HepG2 (cell line): ENCODE measurements at regions of chr2 and their contacts with region 1.

Region 1: DNA sequence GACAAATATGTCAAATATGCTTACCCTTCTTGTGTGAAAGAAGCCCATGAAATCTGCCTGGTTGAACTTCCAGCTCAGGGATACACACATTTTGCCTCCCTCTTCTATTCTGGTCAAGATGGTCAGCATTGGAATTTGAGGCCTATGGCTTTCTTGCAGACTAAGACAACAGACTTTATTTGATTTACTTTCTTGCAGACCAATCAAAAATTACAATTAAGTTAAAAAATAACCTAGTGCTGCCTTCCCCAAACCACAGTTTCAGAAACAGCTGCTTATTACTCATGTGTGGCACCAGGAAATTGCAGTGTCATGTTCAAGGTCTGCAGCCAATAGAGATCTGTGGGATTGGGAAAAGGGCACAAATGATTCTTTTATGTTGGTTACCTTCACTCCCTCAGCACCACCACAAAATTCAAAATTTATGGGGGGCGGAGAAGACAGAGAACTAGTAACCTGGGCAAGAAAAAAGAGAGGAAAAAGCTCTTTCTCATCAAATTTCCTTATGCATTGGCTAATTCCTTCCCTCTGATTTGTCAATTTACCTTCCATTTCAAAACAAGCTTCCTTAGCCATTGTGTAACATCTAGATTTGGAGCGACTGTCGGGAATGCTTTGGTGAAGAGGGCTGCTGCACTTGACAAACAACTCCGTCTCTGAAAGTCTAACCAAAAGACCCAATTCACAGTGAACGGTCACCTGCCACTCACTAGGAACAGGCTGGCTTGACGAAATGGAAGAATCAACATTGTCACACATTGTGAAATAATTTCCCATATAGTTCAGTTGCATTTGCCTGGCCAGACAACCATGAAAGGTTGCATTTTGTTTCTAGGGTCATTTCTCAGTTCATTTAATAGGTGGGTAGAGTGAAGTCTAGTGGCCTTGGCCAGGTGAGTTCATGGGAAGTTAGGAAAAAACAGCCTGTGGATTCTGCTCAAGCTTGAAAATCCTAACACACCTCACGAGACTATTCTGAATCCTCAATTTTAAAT is 100.4 kb upstream of the FZD5 start:
- DNase-seq: peak; percentile 100
- ATAC-seq: peak; percentile 95
- H3K4me3 ChIP-seq: peak overlapping the region; percentile 3 to 10 (median 3); a peak in 4 of 6 replicates
- H3K27ac ChIP-seq: peak overlapping the region; percentile 81
- H3K4me1 ChIP-seq: peaks cover 57% of the 10 kb centered on the region
- H3K27me3 ChIP-seq: no peaks in the 10 kb centered on the region
- CTCF ChIP-seq: no peak
- EP300 ChIP-seq: peak; percentile 97 to 99
- POLR2A ChIP-seq: peak in 1 of 2 experiments; percentile 57; a peak in 2 of 4 replicates
- RAD21 ChIP-seq: peak; percentile 36; the same call in 1 of the 2 replicates

Region 2: GRCh38 chr2:207516206-207516605 is 353.9 kb before region 1 on chr2:
- CTCF ChIA-PET with region 1: no interaction called
- POLR2A ChIA-PET with region 1: no interaction called
- in situ Hi-C with region 1: no loop called
- intact Hi-C with region 1: no loop called
- DNase-seq: no peak
- ATAC-seq: no peak
- H3K4me3 ChIP-seq: no peak overlapping the region
- H3K27ac ChIP-seq: no peak overlapping the region
- H3K4me1 ChIP-seq: no peaks in the 10 kb centered on the region
- H3K27me3 ChIP-seq: no peaks in the 10 kb centered on the region
- CTCF ChIP-seq: no peak
- EP300 ChIP-seq: no peak
- POLR2A ChIP-seq: no peak
- RAD21 ChIP-seq: no peak

Region 3: DNA sequence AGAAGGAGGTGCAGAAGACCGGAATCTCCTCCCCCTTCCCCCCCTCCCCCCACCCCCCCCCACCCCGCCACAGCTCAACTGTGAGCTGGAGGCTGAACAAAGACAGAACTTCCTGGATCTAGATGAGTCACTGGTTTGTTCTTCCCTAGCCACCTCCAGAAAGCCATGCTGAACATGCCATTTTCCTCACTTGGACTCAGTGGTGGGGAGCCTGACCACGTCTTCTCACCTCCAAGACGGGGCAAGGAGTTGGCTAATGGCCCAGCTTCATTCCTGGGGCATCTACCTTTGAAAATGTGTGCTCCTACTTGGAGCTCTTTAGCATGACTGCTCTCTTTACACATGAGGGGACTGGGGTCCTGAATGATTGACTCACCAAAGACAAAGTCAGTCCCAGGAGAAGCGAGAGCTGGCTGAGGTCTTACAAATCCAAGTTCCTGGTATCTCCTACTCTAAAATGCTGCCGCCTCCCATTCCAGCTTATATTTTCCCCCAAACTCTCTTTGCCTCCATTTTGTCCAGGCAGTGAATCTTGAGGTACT is 77.8 kb before region 1 on chr2:
- CTCF ChIA-PET with region 1: no interaction called
- POLR2A ChIA-PET with region 1: interaction called, 12 read pairs
- in situ Hi-C with region 1: no loop called
- intact Hi-C with region 1: loop called (anchors 2 kb)
- DNase-seq: peak; percentile 84
- ATAC-seq: peak; percentile 66
- H3K4me3 ChIP-seq: peak overlapping the region in 1 of 3 experiments; percentile 49; a peak in 2 of 6 replicates
- H3K27ac ChIP-seq: peak overlapping the region; percentile 82
- H3K4me1 ChIP-seq: peaks cover 73% of the 10 kb centered on the region
- H3K27me3 ChIP-seq: no peaks in the 10 kb centered on the region
- CTCF ChIP-seq: no peak
- EP300 ChIP-seq: peak in 1 of 2 experiments; percentile 16; a peak in 1 of 4 replicates
- POLR2A ChIP-seq: 0 out of 4 replicates have a peak, but pooled peaks have one; percentile 44 to 53
- RAD21 ChIP-seq: no peak

Region 4: DNA sequence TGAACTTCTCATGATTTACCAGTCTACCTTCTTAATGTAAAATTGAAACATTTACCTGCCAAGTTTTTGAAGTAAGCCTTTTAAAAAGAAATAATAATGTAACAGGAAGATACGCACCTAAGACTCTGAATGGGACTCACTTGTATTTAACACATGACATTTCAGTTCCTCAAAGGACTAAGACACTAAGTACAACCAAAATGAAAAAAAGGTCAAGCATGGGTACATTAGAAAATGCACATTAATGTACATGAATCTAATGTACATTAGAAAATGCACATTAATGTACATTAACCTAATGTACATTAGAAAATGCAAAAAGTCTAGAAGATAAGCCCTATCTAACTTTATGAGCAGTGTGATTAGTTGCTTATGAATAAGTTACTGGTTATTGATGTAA is 31.1 kb before region 1 on chr2:
- CTCF ChIA-PET with region 1: no interaction called
- POLR2A ChIA-PET with region 1: no interaction called
- in situ Hi-C with region 1: no loop called
- intact Hi-C with region 1: no loop called
- DNase-seq: no peak
- ATAC-seq: no peak
- H3K4me3 ChIP-seq: no peak overlapping the region
- H3K27ac ChIP-seq: no peak overlapping the region
- H3K4me1 ChIP-seq: peaks cover 43% of the 10 kb centered on the region
- H3K27me3 ChIP-seq: no peaks in the 10 kb centered on the region
- CTCF ChIP-seq: no peak
- EP300 ChIP-seq: no peak
- POLR2A ChIP-seq: no peak
- RAD21 ChIP-seq: no peak

Region 5: GRCh38 chr2:207926133-207926988 is 56.3 kb after region 1 on chr2:
- CTCF ChIA-PET with region 1: no interaction called
- POLR2A ChIA-PET with region 1: interaction called, 15 read pairs
- in situ Hi-C with region 1: no loop called
- intact Hi-C with region 1: loop called (anchors 2 kb)
- DNase-seq: peak; percentile 96
- ATAC-seq: peak; percentile 97
- H3K4me3 ChIP-seq: peak overlapping the region in 2 of 3 experiments; percentile 5 to 18; a peak in 2 of 6 replicates
- H3K27ac ChIP-seq: peak overlapping the region; percentile 66
- H3K4me1 ChIP-seq: peaks cover 51% of the 10 kb centered on the region
- H3K27me3 ChIP-seq: no peaks in the 10 kb centered on the region
- CTCF ChIP-seq: no peak
- EP300 ChIP-seq: peak; percentile 53 to 79; a peak in 3 of 4 replicates
- POLR2A ChIP-seq: peak in 1 of 2 experiments; percentile 17; a peak in 1 of 4 replicates
- RAD21 ChIP-seq: no peak; the same call in 1 of the 2 replicates

Region 6: GRCh38 chr2:207939342-207940108 is 69.4 kb after region 1 on chr2:
- CTCF ChIA-PET with region 1: no interaction called
- POLR2A ChIA-PET with region 1: interaction called, 13 read pairs
- in situ Hi-C with region 1: no loop called
- intact Hi-C with region 1: loop called (anchors 2 kb)
- DNase-seq: no peak
- ATAC-seq: no peak
- H3K4me3 ChIP-seq: no peak overlapping the region
- H3K27ac ChIP-seq: no peak overlapping the region
- H3K4me1 ChIP-seq: peaks cover 54% of the 10 kb centered on the region
- H3K27me3 ChIP-seq: no peaks in the 10 kb centered on the region
- CTCF ChIP-seq: no peak
- EP300 ChIP-seq: no peak
- POLR2A ChIP-seq: no peak
- RAD21 ChIP-seq: no peak

Region 7: GRCh38 chr2:208033758-208034502 is 163.8 kb after region 1 on chr2:
- CTCF ChIA-PET with region 1: no interaction called
- POLR2A ChIA-PET with region 1: interaction called, 3 read pairs
- in situ Hi-C with region 1: no loop called
- intact Hi-C with region 1: loop called (anchors 2 kb)
- DNase-seq: peak; percentile 97
- ATAC-seq: peak; percentile 90
- H3K4me3 ChIP-seq: peak overlapping the region; percentile 4 to 16 (median 14); a peak in 2 of 6 replicates
- H3K27ac ChIP-seq: peak overlapping the region; percentile 70
- H3K4me1 ChIP-seq: peaks cover 70% of the 10 kb centered on the region
- H3K27me3 ChIP-seq: no peaks in the 10 kb centered on the region
- CTCF ChIP-seq: peak; percentile 98
- EP300 ChIP-seq: peak; percentile 53 to 55; a peak in 3 of 4 replicates
- POLR2A ChIP-seq: no peak
- RAD21 ChIP-seq: peak; percentile 91

Region 8: DNA sequence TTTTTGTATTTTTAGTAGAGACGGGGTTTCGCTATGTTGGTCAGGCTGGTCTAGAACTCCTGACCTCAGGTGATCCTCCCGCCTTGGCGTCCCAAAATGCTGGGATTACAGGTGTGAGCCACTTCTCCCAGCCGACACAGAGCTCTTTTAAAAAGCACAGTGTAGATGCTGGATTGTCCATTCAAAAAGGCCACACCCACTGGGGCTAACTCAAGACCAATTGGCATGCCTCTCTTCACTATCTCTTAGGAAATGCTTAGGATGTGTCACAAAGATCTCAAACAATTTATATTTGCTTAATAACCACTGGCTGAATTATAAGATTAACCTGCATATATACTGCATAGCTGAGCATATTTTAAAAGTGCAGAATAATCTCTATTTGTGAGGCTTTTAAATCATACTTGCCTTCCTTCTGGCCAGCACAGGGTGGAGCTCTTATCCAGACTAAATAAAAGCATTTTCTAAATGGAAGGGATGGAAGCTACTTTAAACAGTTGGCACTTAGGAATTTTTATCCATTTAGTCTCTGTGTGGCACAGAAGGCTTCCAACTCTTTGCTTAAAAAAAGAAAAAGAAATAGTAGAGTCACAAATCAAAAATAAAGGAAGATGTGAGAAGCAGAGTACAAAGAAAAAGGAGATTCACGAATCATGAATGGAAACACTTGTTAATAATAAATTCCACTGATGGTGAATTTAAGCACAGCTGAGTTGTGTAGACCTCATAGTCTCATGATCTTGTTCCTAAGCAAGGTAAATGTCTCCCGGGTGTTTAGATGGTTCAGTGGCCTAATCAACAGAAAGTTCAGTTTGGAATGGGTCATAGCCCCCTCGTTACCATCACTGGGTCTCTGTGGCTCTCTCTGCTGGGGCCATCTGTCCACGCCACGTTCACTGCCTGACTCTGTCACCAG is 231.9 kb after region 1 on chr2:
- CTCF ChIA-PET with region 1: no interaction called
- POLR2A ChIA-PET with region 1: no interaction called
- in situ Hi-C with region 1: no loop called
- intact Hi-C with region 1: no loop called
- DNase-seq: peak; percentile 46
- ATAC-seq: peak; percentile 79
- H3K4me3 ChIP-seq: no peak overlapping the region
- H3K27ac ChIP-seq: no peak overlapping the region
- H3K4me1 ChIP-seq: peaks cover 12% of the 10 kb centered on the region
- H3K27me3 ChIP-seq: peaks cover 0 to 27% of the 10 kb centered on the region in 2 experiments; a peak in 3 of 5 replicates
- CTCF ChIP-seq: peak; percentile 69
- EP300 ChIP-seq: no peak
- POLR2A ChIP-seq: no peak
- RAD21 ChIP-seq: peak; percentile 63